ENCODE measurements at regions of chr13 and their contacts with region 1.

Region 1: DNA sequence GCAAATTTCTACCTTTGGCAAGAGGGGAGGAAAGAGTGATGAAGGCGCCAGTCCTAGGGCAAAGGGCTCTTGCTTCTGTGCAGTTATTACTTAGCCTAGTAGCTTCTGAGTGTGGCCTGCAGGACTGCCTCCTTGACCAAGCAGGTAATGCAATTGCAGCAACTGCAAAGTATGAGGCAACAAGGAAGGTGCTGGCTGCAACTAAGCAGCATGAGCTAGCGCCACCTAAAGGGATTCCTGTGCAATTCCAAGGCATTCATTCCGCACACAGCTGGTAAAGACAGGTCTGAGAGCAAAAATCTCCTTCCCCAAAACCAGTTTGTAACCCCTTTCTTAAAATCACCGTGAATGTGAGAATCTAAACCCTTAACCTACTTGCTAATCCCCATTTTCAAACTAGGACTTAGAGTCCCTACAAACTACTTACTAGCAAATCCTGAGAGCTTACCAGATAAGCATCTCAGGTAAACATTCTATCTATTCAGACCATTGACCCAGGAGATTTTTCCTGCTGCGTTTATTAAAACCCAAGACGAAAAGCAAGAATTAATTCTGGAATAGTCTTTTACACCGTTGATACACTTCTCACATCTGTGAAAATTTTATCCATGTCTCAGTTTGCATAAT is 62.9 kb downstream of the DCT start:
- DNase-seq: peak; percentile 64
- ATAC-seq: peak; percentile 98
- H3K4me3 Mint-ChIP-seq: no peak overlapping the region
- H3K27ac Mint-ChIP-seq: no peak overlapping the region
- H3K4me1 Mint-ChIP-seq: peaks cover 23% of the 10 kb centered on the region
- H3K27me3 Mint-ChIP-seq: no peaks in the 10 kb centered on the region
- CTCF ChIP-seq: peak; percentile 81

Region 2: DNA sequence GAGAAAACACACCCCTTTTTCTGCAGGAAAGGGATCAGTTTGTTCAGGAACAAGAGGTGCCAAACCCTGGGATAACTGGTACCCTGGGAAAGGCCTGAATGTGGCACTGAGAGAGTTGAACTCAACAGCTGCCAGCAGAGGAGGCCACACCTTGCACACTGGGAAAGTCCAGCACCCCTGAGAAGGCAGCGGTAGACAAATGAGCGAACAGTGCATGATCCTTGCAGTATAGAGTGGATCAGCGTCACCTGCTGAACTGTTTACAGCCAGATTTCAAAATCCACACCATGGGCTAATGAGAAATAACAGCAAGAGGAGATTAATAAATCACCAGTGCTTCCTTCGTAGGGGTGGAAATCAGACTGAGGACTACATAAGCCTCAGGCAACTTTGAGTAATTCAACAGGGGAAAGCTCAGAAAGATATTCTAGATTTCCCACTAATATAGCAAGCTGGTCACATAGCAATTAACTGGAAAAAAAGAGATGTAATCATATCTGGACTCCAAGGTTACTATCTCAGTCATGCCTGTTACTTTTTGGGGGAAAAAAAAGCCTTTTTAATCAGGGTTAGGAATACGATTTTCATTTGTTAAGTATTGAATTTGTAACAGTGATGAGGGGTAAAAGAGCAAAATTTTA is 10.9 kb after region 1 on chr13:
- CTCF ChIA-PET with region 1: interaction called, 25 read pairs
- POLR2A ChIA-PET with region 1: no interaction called
- DNase-seq: no peak
- ATAC-seq: 0 out of 2 replicates have a peak, but pooled peaks have one; percentile 20
- H3K4me3 Mint-ChIP-seq: no peak overlapping the region
- H3K27ac Mint-ChIP-seq: no peak overlapping the region
- H3K4me1 Mint-ChIP-seq: no peaks in the 10 kb centered on the region
- H3K27me3 Mint-ChIP-seq: no peaks in the 10 kb centered on the region
- CTCF ChIP-seq: no peak

Region 3: DNA sequence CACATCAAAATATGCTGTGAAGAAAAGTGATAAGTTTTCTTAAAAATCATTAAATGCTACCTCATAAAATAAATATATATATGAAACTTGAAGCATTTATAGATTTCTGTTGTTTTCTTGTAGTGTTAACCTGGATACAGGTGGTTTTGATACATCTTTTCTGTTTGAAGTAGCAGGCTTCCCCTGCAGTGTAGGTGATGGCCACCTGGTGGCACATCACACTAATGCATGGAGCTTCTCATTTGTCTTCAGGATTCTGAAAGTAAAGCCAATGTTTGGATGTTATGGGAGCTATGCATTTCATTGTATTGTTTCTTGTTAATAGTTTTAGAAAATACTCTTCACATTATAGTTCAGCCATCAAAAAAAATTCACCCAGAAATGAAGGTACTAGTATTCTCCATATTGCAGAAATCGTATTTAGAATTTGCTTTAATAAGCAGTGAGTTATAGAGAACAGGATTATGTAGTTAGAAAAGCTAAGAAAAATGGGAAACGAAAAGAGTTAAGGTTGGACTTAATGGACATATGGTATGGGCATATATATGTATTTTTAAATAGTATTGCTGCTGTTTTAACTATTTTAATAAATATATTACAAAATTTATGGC is 203.8 kb after region 1 on chr13:
- CTCF ChIA-PET with region 1: interaction called, 11 read pairs
- POLR2A ChIA-PET with region 1: no interaction called
- DNase-seq: peak; percentile 48
- ATAC-seq: peak; percentile 77
- H3K4me3 Mint-ChIP-seq: no peak overlapping the region
- H3K27ac Mint-ChIP-seq: no peak overlapping the region
- H3K4me1 Mint-ChIP-seq: no peaks in the 10 kb centered on the region
- H3K27me3 Mint-ChIP-seq: no peaks in the 10 kb centered on the region
- CTCF ChIP-seq: peak; percentile 61

Measured in WTC11 (cell line).